Activated naive CD4-positive, alpha-beta T cell treated with anti-CD3 and anti-CD28 coated beads, Interleukin-2, amount 10 ng/mL, durations not matched to agents 7 days and 5 days (primary cell): ENCODE measurements at regions of chr16 and their contacts with region 1.

Region 1: DNA sequence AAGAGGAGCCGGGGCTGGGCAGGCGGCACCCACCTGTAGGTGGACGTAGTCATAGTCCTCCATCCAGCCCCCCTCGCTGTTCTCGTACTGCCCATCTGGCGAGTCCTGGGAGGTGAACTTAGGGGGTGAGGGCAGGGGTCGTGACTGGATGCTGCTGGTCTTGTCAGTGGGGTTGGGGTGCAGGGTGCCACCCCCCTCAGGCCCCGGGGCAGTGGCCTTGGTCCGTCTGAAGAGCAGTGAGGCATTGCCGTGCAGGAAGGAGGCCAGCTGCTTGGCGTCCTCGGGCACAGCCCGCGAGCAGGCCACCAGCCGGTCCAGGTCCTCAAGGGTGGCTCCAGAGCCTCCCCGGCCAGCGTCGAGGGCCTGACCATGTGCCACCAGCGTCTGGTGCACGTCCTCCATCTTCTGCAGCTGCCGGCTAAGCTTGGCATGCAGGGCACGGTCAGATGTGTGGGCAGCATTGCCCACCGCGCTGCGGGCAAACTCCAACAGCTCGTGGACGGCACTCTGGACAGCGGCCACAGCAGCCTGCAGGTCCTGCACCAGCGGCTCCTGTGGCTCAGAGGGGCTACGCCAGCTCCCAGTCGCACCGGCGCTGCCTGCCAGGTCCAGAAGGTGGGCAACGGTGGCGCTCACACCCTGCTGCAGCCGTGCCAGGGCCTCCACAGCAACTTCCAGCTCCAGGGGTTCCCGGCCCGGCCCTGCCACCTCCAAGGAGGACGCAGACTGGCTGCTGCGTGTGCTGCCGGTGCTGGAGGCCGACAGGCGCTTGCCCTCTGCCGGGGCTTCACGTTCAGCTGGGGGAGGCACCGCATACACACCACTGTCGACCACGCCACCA is 16.3 kb downstream of the CTRB1 start:
- DNase-seq: no peak
- H3K4me3 Mint-ChIP-seq: no peak overlapping the region
- H3K27ac Mint-ChIP-seq: no peak overlapping the region
- H3K4me1 Mint-ChIP-seq: no peaks in the 10 kb centered on the region
- H3K27me3 Mint-ChIP-seq: peaks cover 25% of the 10 kb centered on the region

Region 2: GRCh38 chr16:75130150-75130771 is 104.8 kb before region 1 on chr16:
- CTCF ChIA-PET with region 1: no interaction called
- DNase-seq: no peak
- H3K4me3 Mint-ChIP-seq: no peak overlapping the region
- H3K27ac Mint-ChIP-seq: no peak overlapping the region
- H3K4me1 Mint-ChIP-seq: peaks cover 8% of the 10 kb centered on the region
- H3K27me3 Mint-ChIP-seq: peaks cover 10% of the 10 kb centered on the region

Region 3: DNA sequence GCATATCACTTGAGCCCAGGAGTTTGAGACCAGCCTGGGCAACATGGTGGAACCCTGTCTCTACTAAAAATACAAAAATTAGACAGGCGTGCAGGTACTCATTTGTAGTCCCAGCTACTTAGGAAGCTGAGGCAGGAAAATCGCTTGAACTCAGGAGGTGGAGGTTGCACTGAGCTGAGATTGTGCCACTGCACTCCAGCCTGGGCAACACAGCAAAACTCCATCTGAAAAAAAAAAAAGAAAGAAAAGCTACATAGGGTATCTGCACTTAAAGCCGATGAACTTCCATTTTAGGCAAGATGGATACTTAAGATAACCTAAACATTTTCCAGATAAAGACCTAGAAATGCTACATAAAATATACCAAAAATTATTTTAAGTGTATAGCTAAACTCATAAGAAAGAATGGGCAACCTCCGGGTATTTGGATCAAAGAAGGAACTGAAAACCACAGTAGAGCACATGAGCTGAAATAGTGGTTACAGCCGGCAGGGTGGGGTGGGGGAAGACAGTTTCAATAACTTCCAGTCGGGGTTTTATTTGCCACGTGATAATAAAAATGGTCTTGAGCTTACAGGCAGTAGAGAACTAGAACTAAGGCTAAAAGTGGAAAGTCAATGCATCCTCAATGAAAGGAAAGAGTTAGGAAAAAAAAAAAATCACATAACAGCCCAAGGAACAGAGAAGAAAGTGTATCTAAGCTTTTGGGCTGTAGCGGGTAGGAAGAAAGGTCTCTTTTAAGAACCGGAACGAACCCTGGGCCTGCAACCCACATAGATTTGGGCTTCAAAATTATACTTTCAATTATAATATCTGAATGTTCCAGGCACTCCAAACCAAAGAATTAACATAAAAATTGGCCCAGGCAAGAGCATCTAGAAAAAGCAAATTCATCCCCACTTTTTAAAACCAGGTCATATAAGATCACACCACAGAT is 145.1 kb after region 1 on chr16:
- CTCF ChIA-PET with region 1: interaction called, 43 read pairs
- DNase-seq: peak; percentile 71
- H3K4me3 Mint-ChIP-seq: peak overlapping the region; percentile 14
- H3K27ac Mint-ChIP-seq: peak overlapping the region; percentile 56
- H3K4me1 Mint-ChIP-seq: peaks cover 39% of the 10 kb centered on the region
- H3K27me3 Mint-ChIP-seq: peaks cover 41% of the 10 kb centered on the region

Region 4: DNA sequence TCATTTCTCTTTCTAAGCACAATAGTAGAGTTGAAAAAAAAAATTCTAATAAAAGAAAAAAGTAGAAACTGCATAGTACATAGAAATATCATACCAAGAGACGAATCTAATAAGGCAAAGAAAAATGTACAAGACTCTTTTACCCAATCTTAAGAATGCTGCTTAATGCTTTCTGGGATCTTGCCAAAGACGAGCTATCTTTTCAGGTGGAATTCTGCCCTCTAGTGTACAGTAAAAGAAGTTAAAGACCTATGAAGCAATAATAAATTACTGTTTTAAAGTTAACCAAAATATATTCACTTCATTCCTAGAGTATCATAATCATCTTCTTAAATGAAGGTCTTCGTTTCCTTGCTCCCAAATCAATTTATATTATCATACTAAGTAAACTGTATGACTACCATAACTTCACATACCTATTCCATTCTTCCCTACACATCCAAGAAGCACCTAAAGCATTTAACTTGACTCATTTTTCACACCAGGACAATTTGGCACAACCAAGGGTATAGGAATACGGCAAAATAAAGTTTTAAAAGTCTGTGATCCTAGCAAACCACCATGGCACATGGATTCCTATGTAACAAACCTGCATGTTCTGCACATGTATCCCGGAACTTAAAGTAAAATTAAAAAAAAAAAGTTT is 150.6 kb after region 1 on chr16:
- CTCF ChIA-PET with region 1: interaction called, 43 read pairs
- DNase-seq: no peak
- H3K4me3 Mint-ChIP-seq: no peak overlapping the region
- H3K27ac Mint-ChIP-seq: no peak overlapping the region
- H3K4me1 Mint-ChIP-seq: peaks cover 17% of the 10 kb centered on the region
- H3K27me3 Mint-ChIP-seq: peaks cover 18% of the 10 kb centered on the region

Region 5: DNA sequence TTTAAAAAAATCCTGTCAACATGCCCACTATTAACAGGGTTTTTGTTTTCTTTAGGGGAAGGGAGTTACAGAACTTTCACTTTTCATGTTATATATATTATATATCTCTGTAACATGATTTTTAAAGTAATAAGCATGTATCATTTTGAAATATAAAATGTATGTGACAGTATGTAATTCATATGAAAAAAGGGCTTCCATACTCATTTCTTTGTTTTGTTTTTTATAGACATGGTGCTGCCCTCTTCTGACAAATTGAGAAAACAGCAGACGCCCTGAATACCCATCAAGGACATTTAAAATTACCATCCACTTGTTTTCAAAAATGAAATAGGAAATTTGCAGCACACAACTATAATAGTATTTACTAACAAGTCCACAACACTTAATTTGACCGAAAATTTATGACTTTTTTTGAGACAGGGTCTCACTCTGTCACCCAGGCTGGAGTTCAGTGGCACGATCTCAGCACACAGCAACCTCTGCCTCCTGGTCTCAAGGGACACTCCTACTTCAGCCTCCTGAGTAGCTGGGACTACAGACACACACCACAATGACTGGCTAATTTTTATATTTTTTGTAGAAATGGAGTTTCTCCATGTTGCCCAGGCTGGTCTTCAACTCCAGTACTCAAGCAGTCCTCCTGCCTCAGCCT is 167.9 kb after region 1 on chr16:
- CTCF ChIA-PET with region 1: interaction called, 22 read pairs
- DNase-seq: no peak
- H3K4me3 Mint-ChIP-seq: no peak overlapping the region
- H3K27ac Mint-ChIP-seq: no peak overlapping the region
- H3K4me1 Mint-ChIP-seq: no peaks in the 10 kb centered on the region
- H3K27me3 Mint-ChIP-seq: no peaks in the 10 kb centered on the region